Motor neuron (in vitro differentiated cells): ENCODE measurements at regions of chr14 and their contacts with region 1.

Region 1: DNA sequence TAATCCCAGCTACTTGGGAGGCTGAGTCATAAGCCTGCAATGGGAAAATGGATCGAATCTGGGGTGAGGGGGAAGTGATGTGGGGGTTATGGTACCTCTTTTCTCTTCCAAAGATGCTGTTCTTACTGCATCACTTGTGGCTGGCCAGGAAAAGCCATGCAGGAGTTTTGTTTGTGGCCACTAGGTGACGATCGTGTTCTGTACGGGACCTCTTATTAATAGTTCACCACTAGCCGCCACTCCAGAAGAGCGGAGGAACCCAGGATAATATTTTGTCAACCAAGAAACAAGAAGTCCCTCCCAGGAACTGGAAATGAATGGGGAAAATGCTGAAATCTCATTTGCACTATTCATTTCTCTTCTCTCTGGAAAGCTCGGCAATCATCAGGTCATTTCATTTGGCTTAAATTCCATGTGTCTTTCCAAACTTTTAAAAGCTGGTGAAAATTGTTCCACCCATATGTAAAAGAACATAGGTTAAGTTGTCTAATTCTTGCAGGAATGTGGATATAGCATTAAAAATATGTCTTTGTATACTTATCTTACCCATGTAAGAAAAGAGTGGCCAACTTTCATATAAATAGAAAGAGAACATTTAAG is 8.9 kb downstream of the GPR65 start:
- ATAC-seq: peak; percentile 73 to 99 (median 88)
- H3K4me3 ChIP-seq: no peak overlapping the region
- H3K27ac ChIP-seq: no peak overlapping the region
- H3K4me1 ChIP-seq: no peaks in the 10 kb centered on the region

Region 2: GRCh38 chr14:87916103-87916885 is 97.6 kb before region 1 on chr14:
- in situ Hi-C with region 1: no loop called
- ATAC-seq: no peak
- H3K4me3 ChIP-seq: no peak overlapping the region
- H3K27ac ChIP-seq: no peak overlapping the region
- H3K4me1 ChIP-seq: no peaks in the 10 kb centered on the region

Region 3: DNA sequence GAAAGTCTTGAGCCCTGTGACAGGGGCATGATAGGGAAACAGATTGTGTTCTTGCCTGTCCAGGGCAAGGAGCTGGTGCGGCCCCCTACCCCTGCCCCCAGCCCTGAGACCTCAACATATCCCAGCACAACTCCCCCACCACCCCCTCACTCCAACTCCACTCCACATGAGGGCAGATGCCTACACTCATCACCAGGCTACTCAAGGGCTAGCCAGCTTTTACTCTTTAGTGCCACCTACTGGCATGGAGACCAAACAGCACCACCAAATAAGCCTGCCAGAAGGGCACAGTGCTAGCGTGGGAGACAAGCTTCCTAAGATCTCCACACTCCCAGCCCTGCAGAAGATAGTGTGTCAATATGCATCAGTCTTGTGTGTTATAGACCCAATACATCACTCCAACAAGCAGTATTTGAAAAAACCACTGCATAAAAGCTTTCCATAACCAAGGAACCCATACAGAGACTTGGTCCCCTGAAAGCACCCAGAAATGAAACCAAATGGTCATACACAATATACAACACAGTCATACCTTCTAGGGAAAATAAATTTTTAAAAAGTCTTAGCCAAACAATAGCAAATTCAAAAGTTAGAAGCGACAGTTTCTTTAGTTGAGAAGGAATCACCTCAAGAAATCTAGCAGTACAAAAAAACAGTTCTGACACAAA is 154.8 kb after region 1 on chr14:
- in situ Hi-C with region 1: loop called in 1 of 9 experiments (anchors 10 kb)
- ATAC-seq: peak in 3 of 8 experiments; percentile 85 to 95 (median 93)
- H3K4me3 ChIP-seq: no peak overlapping the region
- H3K27ac ChIP-seq: no peak overlapping the region
- H3K4me1 ChIP-seq: no peaks in the 10 kb centered on the region

Region 4: DNA sequence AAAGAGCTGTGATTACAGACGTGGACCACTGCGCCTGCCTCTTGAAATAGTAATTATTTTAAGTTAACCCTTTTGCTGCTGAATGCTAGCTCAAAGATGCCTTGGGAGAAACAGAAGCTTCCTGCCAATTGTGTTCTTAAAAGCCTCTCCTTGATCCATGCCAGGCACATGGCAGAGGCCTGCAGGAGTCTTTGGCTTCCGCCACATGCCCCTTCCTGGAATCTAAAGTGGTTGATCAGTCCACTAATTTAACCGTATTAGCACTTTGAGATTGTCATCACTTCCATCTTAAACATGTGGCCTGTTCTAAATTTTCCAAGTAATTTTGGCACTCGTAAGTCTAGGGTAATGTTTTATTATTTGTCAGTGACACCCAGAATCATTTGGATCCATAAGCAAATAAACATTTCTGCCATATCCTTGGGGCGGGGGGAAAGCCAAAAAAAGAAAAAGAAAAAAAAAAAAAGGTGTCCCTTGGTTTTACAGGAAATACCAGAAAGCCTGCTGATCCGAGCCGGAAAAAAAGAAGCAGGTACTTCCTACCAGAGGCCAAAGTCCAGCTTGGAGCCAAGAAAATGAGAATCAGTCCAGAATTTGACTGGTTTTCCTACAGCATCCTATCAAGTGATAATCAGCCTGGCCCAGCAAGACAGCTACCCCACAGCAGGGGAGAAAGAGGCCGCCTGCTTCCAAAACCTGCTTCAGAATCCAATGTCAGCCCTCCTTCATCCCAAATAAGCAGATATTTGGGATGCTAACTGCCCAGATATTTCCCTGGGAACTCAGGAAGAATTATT is 204.5 kb after region 1 on chr14:
- in situ Hi-C with region 1: no loop called
- ATAC-seq: no peak
- H3K4me3 ChIP-seq: no peak overlapping the region
- H3K27ac ChIP-seq: no peak overlapping the region
- H3K4me1 ChIP-seq: no peaks in the 10 kb centered on the region

Region 5: GRCh38 chr14:88351966-88352691 is 338.3 kb after region 1 on chr14:
- in situ Hi-C with region 1: loop called in 1 of 9 experiments (anchors 25 kb)
- ATAC-seq: peak in 5 of 8 experiments; percentile 69 to 85 (median 74)
- H3K4me3 ChIP-seq: no peak overlapping the region
- H3K27ac ChIP-seq: no peak overlapping the region
- H3K4me1 ChIP-seq: peaks cover 5 to 11% of the 10 kb centered on the region in 2 donors

Region 6: DNA sequence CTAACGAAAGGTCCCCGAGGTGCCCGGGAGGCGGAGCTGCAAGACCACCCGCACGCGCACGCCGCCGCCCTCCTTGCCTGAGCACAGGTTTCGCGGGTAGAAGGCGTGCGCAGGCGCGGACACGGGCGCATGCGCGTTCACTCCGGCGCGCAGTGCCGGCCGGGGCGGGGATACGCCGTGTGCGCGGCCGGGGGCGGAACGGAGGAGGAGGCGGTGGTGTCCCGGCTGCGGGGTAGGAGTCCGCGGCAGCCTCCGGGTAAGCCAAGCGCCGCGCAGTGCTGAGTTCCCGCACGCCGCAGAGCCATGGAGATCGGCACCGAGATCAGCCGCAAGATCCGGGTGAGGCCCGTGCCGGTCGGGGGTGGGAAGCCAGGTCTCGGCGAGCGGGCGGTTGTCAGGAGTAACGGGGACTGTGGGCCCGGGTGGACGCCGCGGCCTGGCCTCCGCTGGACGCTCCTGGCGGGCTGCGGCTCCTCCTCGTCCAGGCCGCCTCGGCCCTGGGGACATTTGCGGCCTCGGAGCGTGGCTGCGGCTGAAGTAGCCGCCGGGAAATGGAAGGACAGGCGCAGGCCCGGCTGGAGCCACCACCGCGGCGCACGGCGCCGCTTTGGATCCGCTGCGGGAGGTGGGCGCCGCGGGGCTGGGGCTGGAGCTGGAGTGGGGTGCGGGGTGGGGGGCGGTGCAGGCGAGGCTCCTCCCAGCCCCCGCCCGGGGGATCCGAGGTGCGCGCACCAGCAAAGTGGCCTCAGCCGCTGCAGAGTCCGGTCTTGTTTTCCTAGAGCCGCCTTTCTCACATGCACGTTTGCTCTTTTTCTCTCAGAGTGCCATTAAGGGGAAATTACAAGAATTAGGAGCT is 549.2 kb after region 1 on chr14 and contains the start of gene ZC3H14:
- in situ Hi-C with region 1: loop called in 1 of 9 experiments (anchors 25 kb)
- ATAC-seq: peak; percentile 92 to 95 (median 93)
- H3K4me3 ChIP-seq: peak within 1 kb of the TSS; percentile 69 to 92 (median 84)
- H3K27ac ChIP-seq: peak within 1 kb of the TSS; percentile 71 to 90
- H3K4me1 ChIP-seq: peaks cover 5 to 10% of the 10 kb centered on the region in 2 donors
- total RNA-seq, gene ZC3H14: 32.3 to 64.7 (median 48.3) TPM